Activated CD4-positive, alpha-beta T cell treated with anti-CD3 and anti-CD28 coated beads for 36 hours (primary cell): ENCODE measurements at regions of chr3 and their contacts with region 1.

Region 1: DNA sequence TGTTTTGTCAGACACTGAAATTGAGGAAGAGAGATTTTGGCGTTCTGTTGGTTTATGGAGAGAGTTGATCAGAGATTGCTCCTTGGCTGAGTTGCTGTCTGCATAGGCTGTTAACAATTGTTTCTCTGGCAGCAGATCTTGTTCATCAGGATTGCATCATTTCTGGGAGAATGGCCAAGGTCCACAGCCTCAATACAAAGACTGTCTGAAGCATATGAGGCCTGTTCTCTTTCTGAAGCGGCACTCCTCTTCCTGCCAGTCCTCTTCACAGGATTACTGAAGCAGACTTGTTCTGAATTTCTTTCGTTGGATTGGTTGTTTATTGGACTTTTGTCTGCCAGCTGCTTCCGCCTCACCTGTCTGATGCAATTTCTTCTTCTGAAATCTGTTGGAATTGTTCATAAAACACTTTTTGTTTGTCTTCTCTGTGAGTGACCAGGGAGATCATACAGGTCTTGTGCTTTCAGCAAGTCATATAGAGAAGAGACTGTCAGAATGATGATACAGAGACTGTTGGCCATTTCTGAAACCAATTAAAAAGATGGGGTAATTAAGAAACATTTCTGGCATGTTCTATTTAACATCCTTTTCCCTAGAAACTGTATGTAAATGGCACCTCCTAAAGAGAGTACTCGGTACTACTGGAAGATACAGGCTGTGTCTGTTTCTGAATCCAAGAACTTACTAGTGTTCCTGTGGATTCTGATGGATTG is 25.5 kb downstream of the SETD5 start:
- DNase-seq: peak; percentile 27
- ATAC-seq: peak; percentile 79
- H3K4me3 Mint-ChIP-seq: peak overlapping the region; percentile 42
- H3K27ac Mint-ChIP-seq: peak overlapping the region; percentile 97
- H3K4me1 Mint-ChIP-seq: peaks cover 49% of the 10 kb centered on the region
- H3K27me3 Mint-ChIP-seq: no peaks in the 10 kb centered on the region

Region 2: DNA sequence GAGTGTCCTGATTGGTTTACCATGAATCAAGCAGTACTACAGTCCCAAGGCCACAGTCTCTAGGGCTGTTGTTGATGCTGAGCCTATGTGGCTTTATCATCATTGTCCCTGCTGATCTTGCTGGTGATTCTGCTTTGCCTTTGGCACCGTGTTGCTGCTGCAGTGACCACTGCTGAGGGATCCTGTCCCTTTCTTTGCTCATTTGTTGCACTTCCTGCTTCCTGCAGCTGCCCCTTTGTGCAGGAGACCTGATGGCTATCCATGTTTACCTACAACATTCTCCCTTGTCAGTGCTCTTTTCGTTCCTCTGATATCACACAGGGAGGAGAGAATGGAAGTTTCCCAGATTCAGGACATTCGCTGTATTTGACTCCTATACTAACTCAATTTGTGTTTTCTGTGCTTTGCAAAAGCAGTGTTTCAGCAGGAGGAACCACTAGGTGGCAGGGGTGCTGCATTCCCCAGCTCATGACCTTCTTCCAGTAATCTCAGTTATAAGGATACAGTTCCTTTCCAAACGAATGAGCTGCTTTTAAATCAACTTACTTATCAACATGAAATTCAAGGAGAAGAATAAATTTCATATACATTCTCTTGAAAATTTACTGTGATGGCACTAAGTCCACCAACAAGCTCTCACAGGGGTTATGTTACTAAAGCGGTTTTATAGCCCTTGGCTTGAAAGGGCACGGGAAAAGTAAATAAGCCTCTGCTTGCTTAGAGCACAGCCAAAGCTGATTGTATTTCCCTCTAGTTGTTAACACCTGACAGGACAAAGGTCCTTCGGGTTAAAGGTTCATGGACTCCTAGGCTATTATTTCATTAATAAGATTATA is 69.7 kb before region 1 on chr3:
- CTCF ChIA-PET with region 1: interaction called, 5 read pairs
- POLR2A ChIA-PET with region 1: no interaction called
- intact Hi-C with region 1: loop called (anchors 1 kb)
- DNase-seq: peak; percentile 76
- ATAC-seq: peak; percentile 47
- H3K4me3 Mint-ChIP-seq: no peak overlapping the region
- H3K27ac Mint-ChIP-seq: peak overlapping the region; percentile 24
- H3K4me1 Mint-ChIP-seq: peaks cover 24% of the 10 kb centered on the region
- H3K27me3 Mint-ChIP-seq: no peaks in the 10 kb centered on the region

Region 3: DNA sequence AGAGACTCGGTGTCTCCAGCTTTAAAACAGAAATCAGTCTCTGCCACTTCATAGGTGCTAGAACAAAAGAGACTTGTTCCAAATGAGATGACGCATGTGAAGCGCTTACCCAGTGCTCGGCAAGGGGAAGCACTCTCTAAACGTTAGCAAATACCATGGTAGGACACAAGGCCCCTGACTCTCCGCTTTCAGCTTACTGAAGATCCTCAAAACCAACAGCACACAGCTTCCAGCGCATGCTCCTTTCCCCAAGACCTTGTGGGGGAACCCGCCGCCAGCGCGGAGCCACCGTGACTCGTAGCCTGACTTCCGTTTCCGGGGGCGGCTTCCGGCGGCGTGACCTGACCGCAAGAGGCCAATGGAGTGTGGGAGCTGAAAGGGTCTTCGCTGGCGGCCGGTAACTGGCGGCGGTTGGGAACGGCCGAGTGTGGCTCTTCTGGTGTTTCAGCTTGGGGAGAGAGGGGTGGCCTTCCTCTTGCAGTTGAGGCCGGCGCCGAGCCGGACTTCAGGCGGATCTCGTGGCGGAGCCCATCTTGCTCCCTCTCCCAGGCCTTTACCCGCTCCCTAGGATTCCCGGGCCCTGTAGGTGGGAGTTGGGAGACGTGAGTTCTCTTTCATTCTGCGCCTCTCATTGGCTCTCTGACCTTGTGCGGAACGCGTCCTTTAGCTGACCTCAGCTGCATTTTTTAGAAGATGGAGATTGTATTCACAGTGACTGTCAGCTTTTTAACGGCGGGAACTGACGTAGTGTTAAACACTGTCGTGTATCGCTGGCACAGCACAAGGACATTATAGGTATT is 59.9 kb before region 1 on chr3 and contains the start of gene THUMPD3:
- CTCF ChIA-PET with region 1: interaction called, 6 read pairs
- POLR2A ChIA-PET with region 1: no interaction called
- intact Hi-C with region 1: loop called (anchors 2 kb)
- DNase-seq: peak; percentile 96
- ATAC-seq: peak; percentile 93
- H3K4me3 Mint-ChIP-seq: peak within 1 kb of the TSS; percentile 98
- H3K27ac Mint-ChIP-seq: peak within 1 kb of the TSS; percentile 100
- H3K4me1 Mint-ChIP-seq: peaks cover 21% of the 10 kb centered on the region
- H3K27me3 Mint-ChIP-seq: no peaks in the 10 kb centered on the region
- total RNA-seq, gene THUMPD3: 59.6 to 74.3 TPM

Region 4: GRCh38 chr3:9384141-9384853 is 38.6 kb before region 1 on chr3:
- CTCF ChIA-PET with region 1: interaction called, 4 read pairs
- POLR2A ChIA-PET with region 1: no interaction called
- intact Hi-C with region 1: loop called in 1 of 2 experiments (anchors 5 kb)
- DNase-seq: no peak
- ATAC-seq: peak; percentile 29
- H3K4me3 Mint-ChIP-seq: no peak overlapping the region
- H3K27ac Mint-ChIP-seq: peak overlapping the region; percentile 40
- H3K4me1 Mint-ChIP-seq: peaks cover 19% of the 10 kb centered on the region
- H3K27me3 Mint-ChIP-seq: no peaks in the 10 kb centered on the region

Region 5: GRCh38 chr3:9448643-9449042 is 25.8 kb after region 1 on chr3:
- CTCF ChIA-PET with region 1: no interaction called
- POLR2A ChIA-PET with region 1: no interaction called
- intact Hi-C with region 1: loop called in 1 of 2 experiments (anchors 1 kb)
- DNase-seq: no peak
- ATAC-seq: peak; percentile 57
- H3K4me3 Mint-ChIP-seq: no peak overlapping the region
- H3K27ac Mint-ChIP-seq: peak overlapping the region; percentile 32
- H3K4me1 Mint-ChIP-seq: peaks cover 19% of the 10 kb centered on the region
- H3K27me3 Mint-ChIP-seq: no peaks in the 10 kb centered on the region